Endothelial cell of umbilical vein (primary cell): ENCODE measurements at regions of chr17 and their contacts with region 1.

Region 1: DNA sequence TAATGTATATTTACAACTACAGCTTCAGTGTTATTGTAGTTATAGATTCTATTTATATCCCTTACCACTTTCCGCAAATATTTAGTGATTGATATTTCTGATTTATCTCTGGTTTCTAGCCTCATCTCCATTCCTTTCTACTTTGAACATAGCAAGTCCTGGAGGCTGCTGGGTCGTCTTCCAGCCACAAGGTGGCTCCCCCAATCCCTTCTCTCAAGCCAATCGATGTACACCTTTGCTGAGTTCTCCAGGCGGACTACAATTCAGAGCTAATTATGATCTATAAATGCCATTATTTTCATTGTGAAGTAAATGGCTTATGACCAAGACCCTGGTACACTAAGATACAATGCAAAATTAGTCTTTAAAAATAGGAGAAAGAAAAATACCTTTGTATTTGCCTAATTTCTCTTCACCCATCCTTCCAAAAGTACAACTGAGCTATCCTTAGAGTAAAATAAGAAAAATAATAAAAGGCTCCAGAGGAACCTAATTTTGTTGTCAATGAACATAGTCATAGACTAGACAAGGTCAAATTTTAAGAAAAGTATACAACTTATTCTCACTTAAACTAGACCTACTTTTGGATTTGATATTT is 122.1 kb downstream of the SKAP1 start:
- DNase-seq: peak; percentile 59
- H3K4me3 ChIP-seq: no peak overlapping the region
- H3K27ac ChIP-seq: no peak overlapping the region
- H3K4me1 ChIP-seq: no peaks in the 10 kb centered on the region
- H3K27me3 ChIP-seq: no peaks in the 10 kb centered on the region
- CTCF ChIP-seq: peak; percentile 79 to 84
- POLR2A ChIP-seq: no peak

Region 2: DNA sequence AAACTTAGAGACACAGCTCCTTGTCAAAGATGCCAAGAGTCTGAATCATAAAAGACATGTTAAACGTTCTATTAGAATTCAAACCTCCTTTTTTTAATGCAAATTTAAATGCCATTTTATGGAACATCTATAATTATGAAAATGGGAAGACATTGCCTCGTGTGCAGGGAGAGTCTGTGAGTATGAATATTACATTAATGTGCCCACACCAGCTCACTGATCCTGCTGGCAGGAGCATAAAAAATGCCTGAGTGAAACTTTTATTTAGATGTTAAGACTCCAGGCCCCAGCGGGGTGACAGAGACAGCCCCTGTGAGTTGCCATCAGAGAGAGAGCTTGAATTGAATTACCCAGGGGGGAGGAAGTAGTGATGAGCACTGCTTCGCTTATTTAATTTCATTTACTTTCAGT is 115.6 kb before region 1 on chr17:
- CTCF ChIA-PET with region 1: no interaction called
- POLR2A ChIA-PET with region 1: no interaction called
- dilution Hi-C with region 1: no loop called
- intact Hi-C with region 1: no loop called
- DNase-seq: no peak
- H3K4me3 ChIP-seq: no peak overlapping the region
- H3K27ac ChIP-seq: no peak overlapping the region
- H3K4me1 ChIP-seq: peaks cover 6% of the 10 kb centered on the region
- H3K27me3 ChIP-seq: peaks cover 0 to 2% of the 10 kb centered on the region in 2 experiments
- CTCF ChIP-seq: no peak
- POLR2A ChIP-seq: no peak

Region 3: DNA sequence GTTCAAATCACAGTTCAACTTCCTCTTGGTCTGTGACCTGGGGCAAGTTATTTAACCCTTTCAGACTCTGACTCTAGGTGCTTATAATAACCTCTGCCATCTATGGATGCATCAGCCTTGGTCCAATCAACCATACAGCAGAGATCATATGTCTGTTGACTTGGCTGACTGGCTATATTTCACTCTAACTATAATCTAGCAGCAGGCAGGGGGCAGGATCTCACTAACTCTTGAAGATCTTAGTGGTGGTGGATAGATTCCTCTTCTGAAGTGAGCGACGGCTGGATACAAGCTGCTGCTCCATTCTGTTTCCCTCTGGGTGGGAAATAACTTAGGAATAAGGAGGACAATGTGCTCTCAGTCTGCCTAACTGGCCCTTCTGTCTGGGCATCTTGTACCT is 24.5 kb before region 1 on chr17:
- CTCF ChIA-PET with region 1: interaction called, 14 read pairs
- POLR2A ChIA-PET with region 1: no interaction called
- dilution Hi-C with region 1: no loop called
- intact Hi-C with region 1: no loop called
- DNase-seq: no peak
- H3K4me3 ChIP-seq: no peak overlapping the region
- H3K27ac ChIP-seq: no peak overlapping the region
- H3K4me1 ChIP-seq: no peaks in the 10 kb centered on the region
- H3K27me3 ChIP-seq: no peaks in the 10 kb centered on the region
- CTCF ChIP-seq: no peak
- POLR2A ChIP-seq: no peak

Region 4: DNA sequence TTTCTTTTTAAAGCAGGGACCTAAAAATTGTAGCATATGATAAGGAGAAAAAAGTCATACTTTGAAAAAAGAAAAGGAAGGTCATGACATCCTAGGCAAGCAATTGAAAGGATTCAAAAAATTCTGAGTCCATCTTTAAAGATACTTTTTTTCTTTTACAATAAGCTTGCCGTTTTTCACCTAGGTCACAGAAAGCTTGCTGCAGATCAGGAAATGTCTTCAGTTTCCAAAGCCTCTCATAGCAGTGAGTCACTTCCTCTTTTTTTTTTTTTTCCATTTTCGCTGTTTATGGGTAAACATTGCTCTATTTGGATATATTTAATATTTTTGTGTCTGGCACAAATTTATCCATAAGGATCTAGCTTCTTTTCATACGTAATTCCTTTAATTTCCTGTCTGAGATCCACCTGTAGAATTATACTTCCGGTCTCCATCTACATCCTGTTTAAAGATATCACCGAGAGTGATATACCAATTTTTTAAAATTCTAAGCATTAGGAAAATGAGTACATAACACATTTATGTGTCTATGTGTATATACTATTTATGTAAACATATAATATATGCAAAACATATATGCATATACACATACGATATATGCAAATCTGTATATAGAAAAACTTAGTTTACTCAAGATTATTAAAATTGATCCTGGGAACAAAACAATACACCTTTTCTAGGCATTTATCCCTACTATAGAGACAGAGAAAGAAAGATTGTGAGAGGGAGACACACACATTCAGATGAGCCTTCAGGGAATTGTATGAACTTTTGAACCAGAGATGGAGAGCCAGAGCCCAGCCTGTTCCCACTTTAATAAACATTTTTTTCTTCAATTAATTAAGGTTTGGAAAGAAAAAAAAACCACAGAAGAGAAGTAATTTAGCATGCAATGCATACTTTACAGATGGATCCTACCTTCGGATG is 12.3 kb before region 1 on chr17:
- CTCF ChIA-PET with region 1: interaction called, 21 read pairs
- POLR2A ChIA-PET with region 1: no interaction called
- dilution Hi-C with region 1: no loop called
- intact Hi-C with region 1: no loop called
- DNase-seq: peak; percentile 76
- H3K4me3 ChIP-seq: peak overlapping the region in 2 of 3 experiments; percentile 10 to 67
- H3K27ac ChIP-seq: peak overlapping the region; percentile 88
- H3K4me1 ChIP-seq: peaks cover 29% of the 10 kb centered on the region
- H3K27me3 ChIP-seq: no peaks in the 10 kb centered on the region
- CTCF ChIP-seq: no peak
- POLR2A ChIP-seq: no peak

Region 5: DNA sequence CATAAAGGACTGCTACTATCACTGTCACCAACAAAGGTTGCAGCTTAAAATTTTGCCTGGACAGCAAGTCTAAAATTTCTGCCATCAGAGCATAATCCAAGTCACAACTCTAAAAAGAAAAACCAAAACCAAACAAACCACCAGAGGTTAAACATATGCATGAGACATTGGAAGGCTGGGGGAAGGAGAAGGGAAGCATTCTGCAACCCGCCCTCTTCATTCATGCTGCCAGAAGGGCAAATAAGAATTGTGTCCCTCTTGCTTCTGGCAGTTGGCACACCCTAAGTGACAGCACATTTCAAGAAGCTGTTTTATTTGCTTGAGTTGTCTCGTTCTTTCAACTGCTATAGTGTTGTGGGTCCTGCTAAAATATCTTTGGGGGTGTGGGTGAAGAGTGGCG is 22.5 kb after region 1 on chr17:
- CTCF ChIA-PET with region 1: interaction called, 18 read pairs
- POLR2A ChIA-PET with region 1: no interaction called
- dilution Hi-C with region 1: no loop called
- intact Hi-C with region 1: no loop called
- DNase-seq: no peak
- H3K4me3 ChIP-seq: no peak overlapping the region
- H3K27ac ChIP-seq: no peak overlapping the region
- H3K4me1 ChIP-seq: no peaks in the 10 kb centered on the region
- H3K27me3 ChIP-seq: no peaks in the 10 kb centered on the region
- CTCF ChIP-seq: no peak
- POLR2A ChIP-seq: no peak

Region 6: GRCh38 chr17:48612854-48613691 is 305.2 kb after region 1 on chr17:
- CTCF ChIA-PET with region 1: interaction called, 10 read pairs
- POLR2A ChIA-PET with region 1: no interaction called
- dilution Hi-C with region 1: no loop called
- intact Hi-C with region 1: loop called (anchors 1 kb)
- DNase-seq: peak; percentile 67
- H3K4me3 ChIP-seq: peak overlapping the region; percentile 52 to 86 (median 80)
- H3K27ac ChIP-seq: peak overlapping the region; percentile 47
- H3K4me1 ChIP-seq: peaks cover 38% of the 10 kb centered on the region
- H3K27me3 ChIP-seq: peaks cover 28 to 35% of the 10 kb centered on the region in 2 experiments
- CTCF ChIP-seq: peak; percentile 4 to 47
- POLR2A ChIP-seq: no peak

Region 7: DNA sequence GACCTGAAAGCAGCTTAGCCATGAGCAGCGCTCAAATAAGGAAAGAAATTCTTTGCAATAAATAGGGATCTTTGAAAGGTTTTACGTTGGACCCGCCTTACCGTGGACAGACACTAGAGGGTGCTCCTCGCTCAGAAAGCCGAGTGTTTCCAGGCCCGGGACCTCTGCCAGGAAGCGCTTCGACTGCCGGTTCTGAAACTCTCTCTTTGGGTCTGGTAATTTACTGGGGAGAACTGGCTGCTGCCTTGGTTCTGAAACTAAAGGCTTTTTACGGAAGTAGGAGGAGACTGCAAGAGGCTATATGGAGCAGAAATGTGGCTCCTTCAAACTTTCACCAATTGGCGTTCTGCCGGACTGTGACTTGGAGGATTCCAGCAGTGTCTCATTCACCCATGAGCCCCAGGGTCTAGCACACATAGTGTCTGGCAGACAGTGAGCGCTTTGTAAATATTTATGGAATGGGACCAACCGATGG is 363.8 kb after region 1 on chr17:
- CTCF ChIA-PET with region 1: no interaction called
- POLR2A ChIA-PET with region 1: no interaction called
- dilution Hi-C with region 1: no loop called
- intact Hi-C with region 1: no loop called
- DNase-seq: peak; percentile 77
- H3K4me3 ChIP-seq: peak overlapping the region in 1 of 3 experiments; percentile 43
- H3K27ac ChIP-seq: no peak overlapping the region
- H3K4me1 ChIP-seq: no peaks in the 10 kb centered on the region
- H3K27me3 ChIP-seq: peaks cover 12 to 21% of the 10 kb centered on the region in 2 experiments
- CTCF ChIP-seq: peak; percentile 79 to 88
- POLR2A ChIP-seq: no peak